Right cardiac atrium (tissue), 5 donors: ENCODE measurements at regions of chr10 and their contacts with region 1.

Region 1: DNA sequence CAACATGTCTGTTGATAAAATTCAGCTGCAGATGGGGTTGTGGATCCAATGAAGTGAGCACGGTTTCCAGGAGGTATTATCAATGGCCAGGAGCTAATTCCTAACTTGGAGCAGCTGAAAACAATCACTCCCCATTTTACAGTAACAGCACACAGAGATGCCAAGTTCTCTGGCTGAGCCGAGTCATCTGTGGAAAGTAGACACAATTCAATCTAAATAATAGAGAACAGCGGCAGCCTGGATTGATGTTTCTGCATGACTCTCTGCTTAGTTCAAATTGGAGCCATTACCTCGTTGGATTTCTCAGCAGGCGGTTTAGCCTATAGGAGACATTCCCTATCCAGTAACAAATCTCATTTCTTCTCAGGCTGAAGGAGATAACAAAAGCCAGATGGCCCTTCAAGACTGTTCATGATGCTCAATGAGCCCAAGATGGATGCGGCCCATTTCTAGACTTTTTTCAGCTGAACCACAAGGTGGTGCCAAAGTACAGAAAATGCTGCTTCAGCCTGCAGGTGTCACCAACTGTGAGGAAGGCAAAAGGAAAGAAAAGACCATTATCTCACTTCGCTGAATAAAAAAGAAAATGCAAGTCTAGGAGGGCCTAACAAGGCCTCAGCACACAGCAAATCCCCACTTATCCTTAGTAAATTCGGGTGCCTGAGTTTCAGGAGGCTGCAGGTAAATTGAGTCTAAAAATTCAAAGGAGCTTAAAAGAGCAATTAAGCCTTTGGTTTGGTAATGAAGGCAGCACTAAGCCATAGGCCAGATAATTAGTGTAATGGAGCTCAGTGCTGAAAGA is 83.7 kb downstream of the SLC16A9 start:
- DNase-seq: no peak
- ATAC-seq: peak; percentile 78 to 80
- H3K4me3 ChIP-seq: no peak overlapping the region
- H3K27ac ChIP-seq: no peak overlapping the region
- H3K4me1 ChIP-seq: no peaks in the 10 kb centered on the region
- H3K27me3 ChIP-seq: no peaks in the 10 kb centered on the region

Region 2: GRCh38 chr10:58781873-58782488 is 843.9 kb before region 1 on chr10:
- intact Hi-C with region 1: loop called in 2 of 4 experiments (anchors 5 to 10 kb)
- DNase-seq: no peak
- ATAC-seq: peak in 1 of 2 donors; percentile 27
- H3K4me3 ChIP-seq: no peak overlapping the region
- H3K27ac ChIP-seq: no peak overlapping the region
- H3K4me1 ChIP-seq: peaks cover 3% of the 10 kb centered on the region
- H3K27me3 ChIP-seq: no peaks in the 10 kb centered on the region

Region 3: GRCh38 chr10:59240582-59241183 is 385.2 kb before region 1 on chr10:
- intact Hi-C with region 1: loop called in 2 of 4 experiments (anchors 5 kb)
- DNase-seq: no peak
- ATAC-seq: no peak
- H3K4me3 ChIP-seq: no peak overlapping the region
- H3K27ac ChIP-seq: no peak overlapping the region
- H3K4me1 ChIP-seq: no peaks in the 10 kb centered on the region
- H3K27me3 ChIP-seq: no peaks in the 10 kb centered on the region

Region 4: GRCh38 chr10:59734014-59734462 is 108.1 kb after region 1 on chr10:
- intact Hi-C with region 1: no loop called
- DNase-seq: no peak
- ATAC-seq: no peak
- H3K4me3 ChIP-seq: no peak overlapping the region
- H3K27ac ChIP-seq: no peak overlapping the region
- H3K4me1 ChIP-seq: no peaks in the 10 kb centered on the region
- H3K27me3 ChIP-seq: no peaks in the 10 kb centered on the region

Region 5: DNA sequence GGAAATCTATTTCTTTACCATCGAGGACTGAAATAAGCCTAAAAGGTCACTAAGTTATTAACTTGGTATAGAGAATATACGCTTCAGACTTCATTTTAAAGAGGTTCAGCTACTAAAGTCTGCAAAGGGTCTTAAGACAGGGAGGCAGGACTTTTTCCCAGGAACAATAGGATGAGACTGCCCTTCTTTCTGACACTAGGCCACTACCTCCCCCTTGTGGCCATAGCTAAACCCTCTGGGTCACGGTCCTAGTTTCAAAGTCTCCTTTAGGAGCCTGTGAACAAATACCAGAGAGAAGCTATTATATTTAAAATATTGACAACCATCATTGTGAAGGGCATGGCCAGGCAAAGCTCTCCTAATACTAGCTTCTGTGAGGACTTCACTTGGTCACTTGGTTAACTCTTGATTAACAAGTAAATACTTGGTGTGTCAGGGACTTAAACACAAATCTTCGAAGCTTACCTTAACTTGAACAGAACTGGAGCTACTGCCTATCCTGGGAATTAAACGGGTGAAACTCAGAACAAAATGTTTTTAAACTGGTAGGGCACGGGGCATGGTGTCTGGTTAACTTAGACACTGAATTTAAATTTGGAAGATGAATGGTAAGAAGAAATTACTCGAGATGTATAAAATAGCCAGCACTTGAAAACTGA is 204.8 kb after region 1 on chr10:
- intact Hi-C with region 1: loop called (anchors 2 to 5 kb)
- DNase-seq: peak in 1 of 3 donors; percentile 59
- ATAC-seq: peak; percentile 65 to 68
- H3K4me3 ChIP-seq: no peak overlapping the region
- H3K27ac ChIP-seq: no peak overlapping the region
- H3K4me1 ChIP-seq: peaks cover 2% of the 10 kb centered on the region
- H3K27me3 ChIP-seq: no peaks in the 10 kb centered on the region

Region 6: GRCh38 chr10:60032723-60033122 is 406.8 kb after region 1 on chr10:
- intact Hi-C with region 1: loop called in 2 of 4 experiments (anchors 10 kb)
- DNase-seq: peak in 1 of 3 donors; percentile 56
- ATAC-seq: peak; percentile 89 to 92
- H3K4me3 ChIP-seq: no peak overlapping the region
- H3K27ac ChIP-seq: no peak overlapping the region
- H3K4me1 ChIP-seq: peaks cover 2% of the 10 kb centered on the region
- H3K27me3 ChIP-seq: no peaks in the 10 kb centered on the region